GM10248 (cell line): ENCODE measurements at regions of chr6 and their contacts with region 1.

Region 1: GRCh38 chr6:70686548-70687133 is 19.0 kb downstream of the SMAP1 start:
- DNase-seq: peak; percentile 29
- CTCF ChIP-seq: peak; percentile 69

Region 2: GRCh38 chr6:70520575-70520974 is 166.1 kb before region 1 on chr6:
- CTCF ChIA-PET with region 1: interaction called, 41 read pairs
- POLR2A ChIA-PET with region 1: no interaction called
- DNase-seq: peak; percentile 11
- CTCF ChIP-seq: peak; percentile 39

Region 3: GRCh38 chr6:70667711-70668498 is 18.7 kb before region 1 on chr6 and contains the start of gene SMAP1:
- CTCF ChIA-PET with region 1: interaction called, 21 read pairs
- POLR2A ChIA-PET with region 1: no interaction called
- DNase-seq: peak; percentile 97
- CTCF ChIP-seq: no peak

Region 4: DNA sequence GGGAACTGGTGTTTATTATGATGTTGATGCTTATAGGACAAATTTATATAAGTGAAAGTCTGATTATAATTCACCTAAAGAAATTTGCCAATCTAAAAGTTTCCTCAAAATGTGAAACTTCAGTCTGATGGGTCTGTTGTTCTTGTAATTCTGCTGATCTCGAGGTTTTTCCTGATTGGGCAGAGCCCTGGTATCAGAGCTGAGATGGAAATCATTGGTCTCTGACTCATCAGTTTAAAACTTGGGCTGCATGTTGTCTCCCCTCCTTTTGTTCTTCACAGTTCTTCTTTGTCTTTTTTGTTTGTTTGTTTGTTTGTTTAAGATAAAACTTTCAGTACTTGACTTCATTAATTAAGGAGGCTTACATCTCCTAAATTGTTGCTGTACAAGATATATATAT is 13.0 kb before region 1 on chr6:
- CTCF ChIA-PET with region 1: interaction called, 21 read pairs
- POLR2A ChIA-PET with region 1: no interaction called
- DNase-seq: no peak
- CTCF ChIP-seq: no peak

Region 5: GRCh38 chr6:70700922-70701876 is 14.6 kb after region 1 on chr6:
- CTCF ChIA-PET with region 1: interaction called, 13 read pairs
- POLR2A ChIA-PET with region 1: no interaction called
- DNase-seq: no peak
- CTCF ChIP-seq: no peak

Region 6: DNA sequence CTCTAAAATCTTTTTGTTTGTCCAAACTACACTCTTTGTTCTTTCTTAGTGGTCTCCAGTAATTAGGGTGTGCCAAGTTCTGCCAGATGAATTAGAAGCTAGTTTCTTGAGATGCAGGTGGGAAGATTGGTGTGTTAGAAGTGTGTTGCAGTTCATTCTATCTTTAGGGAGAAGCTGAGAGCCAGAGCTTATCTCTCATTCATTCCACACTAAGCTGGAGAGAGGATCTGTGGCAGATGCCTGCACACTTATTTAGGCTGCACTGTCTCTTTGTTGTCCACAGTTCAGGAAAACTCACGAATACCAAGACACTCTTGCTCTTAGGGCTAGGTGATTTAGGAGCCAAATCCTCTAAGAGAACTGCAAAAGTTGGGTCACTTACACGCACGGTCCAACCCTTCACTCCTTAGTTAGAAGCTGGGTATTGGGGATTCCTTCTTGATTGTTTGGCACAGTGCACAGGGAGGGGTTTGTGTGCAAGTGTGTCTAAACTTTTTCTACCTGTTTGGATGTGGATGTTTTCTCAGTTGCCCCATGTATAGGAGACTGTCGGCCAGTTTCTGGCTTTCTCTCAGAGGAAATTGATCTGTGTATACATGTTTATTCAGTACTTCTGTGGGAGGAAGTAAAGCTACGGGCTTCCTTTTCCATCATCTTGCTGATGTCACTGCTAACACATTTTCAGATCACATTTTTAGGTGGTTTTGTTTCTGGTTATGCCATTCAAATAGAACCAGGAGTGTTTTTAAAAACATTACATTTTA is 30.6 kb after region 1 on chr6:
- CTCF ChIA-PET with region 1: no interaction called
- POLR2A ChIA-PET with region 1: no interaction called
- DNase-seq: no peak
- CTCF ChIP-seq: no peak